ENCODE measurements at regions of chr12 and their contacts with region 1.

Region 1: DNA sequence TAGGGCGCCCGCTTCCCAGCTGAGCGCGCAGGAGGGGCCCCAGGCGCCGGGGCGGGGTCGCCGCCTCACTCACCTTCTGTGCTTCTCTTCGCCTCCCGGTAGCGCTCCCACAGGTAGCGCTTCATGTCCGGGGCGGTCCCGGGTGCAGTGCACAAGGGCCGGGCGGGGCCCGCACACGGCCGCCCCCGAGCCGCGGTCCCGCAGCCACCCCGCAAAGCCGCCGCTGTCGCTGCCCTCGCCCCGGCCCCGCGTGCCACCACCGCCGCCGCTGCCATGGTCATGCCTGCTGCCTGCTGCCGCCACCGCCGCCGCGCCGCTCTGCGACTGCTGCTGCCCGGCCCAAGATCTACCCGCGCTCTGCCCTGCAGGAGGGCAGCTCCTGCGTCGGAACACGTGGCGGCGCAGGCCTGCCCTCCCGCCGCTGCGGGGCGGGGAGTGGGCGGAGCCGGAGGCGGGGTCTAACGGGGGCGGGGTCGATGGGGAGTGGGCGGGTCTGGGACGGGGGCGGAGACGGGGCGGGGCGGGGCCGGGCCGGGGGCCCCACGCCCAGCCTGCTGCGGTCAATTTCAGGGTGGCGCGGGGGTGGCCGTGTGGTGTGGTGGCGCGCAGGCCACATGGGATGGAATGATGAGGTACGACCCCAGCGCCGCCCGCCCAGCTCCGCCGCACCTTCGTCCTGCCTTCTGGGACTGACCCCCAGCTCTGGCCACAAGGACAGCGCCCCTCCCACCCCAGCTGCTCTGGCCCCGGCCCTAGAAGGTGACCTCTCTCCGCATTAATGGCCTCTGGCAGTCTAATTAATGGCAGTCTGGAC is at the start of gene NT5DC3:
- DNase-seq: peak; percentile 93
- H3K4me3 Mint-ChIP-seq: peak within 1 kb of the TSS; percentile 85
- H3K27ac Mint-ChIP-seq: peak within 1 kb of the TSS; percentile 86
- H3K4me1 Mint-ChIP-seq: peaks cover 13% of the 10 kb centered on the region
- H3K27me3 Mint-ChIP-seq: peaks cover 33% of the 10 kb centered on the region
- total RNA-seq, gene NT5DC3: 12.3 and 14.9 TPM in 2 replicates

Region 2: DNA sequence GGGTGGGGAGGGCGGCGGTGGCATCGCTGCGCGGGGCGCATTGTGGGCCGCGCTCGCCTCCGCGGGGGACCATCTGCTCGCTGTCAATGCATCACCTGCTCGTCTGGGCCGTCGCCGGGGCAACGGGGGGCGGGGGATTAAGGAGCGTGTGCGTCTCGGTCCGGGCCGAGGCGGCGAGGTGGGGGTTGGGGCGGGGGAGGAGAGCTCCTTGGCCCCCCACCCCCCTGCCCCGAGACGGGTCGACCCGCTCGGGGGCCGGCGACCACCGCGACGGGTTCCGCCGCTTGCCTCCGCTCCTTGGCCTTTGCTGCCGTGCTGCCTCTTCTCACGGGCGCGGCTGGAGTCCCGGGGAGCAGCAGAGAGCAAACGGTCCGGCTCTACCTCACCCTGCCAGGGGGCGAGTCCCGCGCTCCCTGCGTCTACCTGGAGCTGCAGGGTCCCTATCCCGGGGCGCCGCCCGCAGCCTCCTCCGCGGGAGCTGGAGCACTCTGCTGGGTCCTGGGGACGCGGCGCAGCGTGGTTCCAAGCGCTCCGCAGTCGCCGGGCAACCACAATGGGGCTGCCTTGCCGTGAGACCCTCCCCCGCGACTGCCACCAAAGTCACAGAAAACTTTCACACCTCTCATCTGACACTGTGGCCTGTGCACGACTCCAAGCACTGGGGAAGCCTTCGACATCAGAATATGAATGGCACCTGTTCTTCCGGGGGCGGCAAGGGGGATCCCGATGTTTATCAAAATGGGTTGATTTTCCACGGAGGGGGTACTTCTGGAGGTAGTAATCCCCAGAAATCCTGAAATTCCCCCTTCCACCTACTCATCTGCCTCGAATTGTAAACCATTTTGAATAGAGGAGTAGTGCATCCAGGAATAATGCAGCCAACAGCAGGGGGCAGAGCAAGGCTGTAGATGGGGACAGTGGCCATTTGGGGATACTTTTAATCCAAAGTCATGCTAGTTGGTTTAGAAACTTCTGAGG is 345.3 kb before region 1 on chr12 and contains the start of gene C12orf42:
- intact Hi-C with region 1: loop called (anchors 5 kb)
- DNase-seq: peak; percentile 86
- H3K4me3 Mint-ChIP-seq: peak within 1 kb of the TSS; percentile 68
- H3K27ac Mint-ChIP-seq: peak within 1 kb of the TSS; percentile 72
- H3K4me1 Mint-ChIP-seq: peaks cover 25% of the 10 kb centered on the region
- H3K27me3 Mint-ChIP-seq: peaks cover 39% of the 10 kb centered on the region
- total RNA-seq, gene C12orf42: not detected in 2 replicates

Region 3: GRCh38 chr12:103868215-103868614 is 27.1 kb after region 1 on chr12:
- intact Hi-C with region 1: no loop called
- DNase-seq: no peak
- H3K4me3 Mint-ChIP-seq: no peak overlapping the region
- H3K27ac Mint-ChIP-seq: no peak overlapping the region
- H3K4me1 Mint-ChIP-seq: no peaks in the 10 kb centered on the region
- H3K27me3 Mint-ChIP-seq: peaks cover 11% of the 10 kb centered on the region

Region 4: DNA sequence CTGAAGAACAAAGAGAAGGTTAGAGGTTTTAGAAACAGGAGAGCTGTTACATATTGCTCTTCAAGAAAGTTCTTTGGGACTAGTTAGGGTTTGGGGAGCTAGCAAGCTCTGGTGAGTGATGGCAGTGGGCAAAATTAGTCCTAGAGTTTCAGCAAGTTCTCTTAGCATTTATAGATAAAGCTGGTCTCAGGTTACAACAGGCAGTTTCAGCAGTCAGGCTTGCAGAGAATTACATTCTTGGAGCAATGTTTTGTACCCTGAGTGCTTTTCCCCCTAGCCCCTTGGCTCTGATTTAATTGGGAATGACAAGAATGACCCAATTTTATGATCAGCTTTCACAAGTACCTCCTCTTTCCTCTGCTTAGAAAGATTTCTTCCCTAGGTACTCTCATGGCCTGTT is 441.0 kb after region 1 on chr12:
- intact Hi-C with region 1: no loop called
- DNase-seq: no peak
- H3K4me3 Mint-ChIP-seq: no peak overlapping the region
- H3K27ac Mint-ChIP-seq: no peak overlapping the region
- H3K4me1 Mint-ChIP-seq: peaks cover 19% of the 10 kb centered on the region
- H3K27me3 Mint-ChIP-seq: peaks cover 8% of the 10 kb centered on the region